Gastrocnemius medialis (tissue), 4 donors: ENCODE measurements at regions of chr2 and their contacts with region 1.

Region 1: DNA sequence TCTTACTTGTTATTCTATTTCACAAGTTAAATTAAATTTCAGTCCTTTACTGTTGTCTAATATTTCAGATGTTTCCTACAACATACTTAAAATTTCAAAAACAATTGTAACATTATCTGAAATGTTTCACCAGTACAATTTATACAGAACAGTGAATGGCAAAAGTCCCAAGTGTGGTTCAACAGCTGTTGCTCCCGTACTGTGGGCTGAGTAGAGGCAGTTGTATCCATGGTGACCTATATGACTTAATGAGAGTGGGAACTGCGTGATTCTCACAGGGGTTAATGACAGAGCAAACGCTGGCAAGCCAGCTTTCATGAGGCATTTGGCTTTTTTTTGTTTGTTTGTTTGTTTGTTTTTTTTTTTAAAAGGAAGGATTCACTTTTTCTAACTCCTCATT is 5.3 kb upstream of the PLCL1 start:
- DNase-seq: no peak
- ATAC-seq: peak; percentile 35 to 43
- H3K4me3 ChIP-seq: no peak overlapping the region
- H3K27ac ChIP-seq: peak overlapping the region; percentile 43 to 89 (median 68)
- H3K4me1 ChIP-seq: peaks cover 38% of the 10 kb centered on the region in 2 donors
- H3K27me3 ChIP-seq: no peaks in the 10 kb centered on the region
- CTCF ChIP-seq: no peak
- POLR2A ChIP-seq: no peak

Region 2: GRCh38 chr2:198296665-198297308 is 497.7 kb after region 1 on chr2:
- in situ Hi-C with region 1: loop called (anchors 5 to 25 kb)
- intact Hi-C with region 1: loop called (anchors 1 kb)
- DNase-seq: peak in 1 of 2 donors; percentile 15
- ATAC-seq: peak; percentile 58 to 80
- H3K4me3 ChIP-seq: peak overlapping the region in 1 of 4 donors; percentile 17
- H3K27ac ChIP-seq: no peak overlapping the region
- H3K4me1 ChIP-seq: no peaks in the 10 kb centered on the region
- H3K27me3 ChIP-seq: no peaks in the 10 kb centered on the region
- CTCF ChIP-seq: peak; percentile 53 to 86 (median 70)
- POLR2A ChIP-seq: no peak